PC-3 (cell line): ENCODE measurements at regions of chr1 and their contacts with region 1.

Region 1: GRCh38 chr1:206106328-206107167 is 10.6 kb downstream of the AVPR1B start:
- DNase-seq: peak; percentile 92
- ATAC-seq: peak; percentile 97
- H3K4me3 ChIP-seq: no peak overlapping the region
- H3K27ac ChIP-seq: no peak overlapping the region
- H3K4me1 ChIP-seq: no peaks in the 10 kb centered on the region
- H3K27me3 ChIP-seq: peaks cover 14% of the 10 kb centered on the region
- CTCF ChIP-seq: peak; percentile 96

Region 2: DNA sequence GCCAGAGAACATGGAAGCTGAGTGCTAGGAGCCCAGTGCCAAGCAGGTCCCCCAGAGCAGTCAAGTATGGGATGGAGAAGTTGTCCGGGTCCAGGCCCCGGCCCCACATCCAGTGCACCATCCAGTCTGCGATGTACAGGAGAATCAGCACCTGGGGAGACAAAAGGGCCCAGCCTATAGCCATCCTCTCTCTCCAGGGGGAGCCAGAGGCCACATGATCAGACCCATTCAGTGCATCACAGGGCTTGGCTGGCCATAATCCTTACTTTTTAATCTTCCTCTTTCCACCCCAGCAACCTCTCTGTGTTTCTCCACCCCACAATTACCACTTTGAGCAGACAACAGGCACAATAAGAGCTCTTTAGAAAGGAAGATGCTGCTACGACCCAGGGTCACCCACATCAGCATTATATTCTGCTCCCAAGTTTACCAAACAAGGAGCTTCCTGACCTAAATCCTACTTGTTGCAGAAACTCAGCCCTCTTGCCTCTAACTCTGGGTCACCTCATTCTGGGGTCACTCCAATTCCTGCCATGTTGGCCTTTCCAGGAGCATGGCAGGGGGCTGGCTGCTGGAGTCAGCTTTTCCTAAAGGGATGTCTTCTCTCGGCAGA is 314.9 kb before region 1 on chr1:
- CTCF ChIA-PET with region 1: no interaction called
- POLR2A ChIA-PET with region 1: no interaction called
- intact Hi-C with region 1: loop called (anchors 1 kb)
- DNase-seq: peak; percentile 77
- ATAC-seq: peak; percentile 100
- H3K4me3 ChIP-seq: no peak overlapping the region
- H3K27ac ChIP-seq: no peak overlapping the region
- H3K4me1 ChIP-seq: no peaks in the 10 kb centered on the region
- H3K27me3 ChIP-seq: no peaks in the 10 kb centered on the region
- CTCF ChIP-seq: peak; percentile 93

Region 3: DNA sequence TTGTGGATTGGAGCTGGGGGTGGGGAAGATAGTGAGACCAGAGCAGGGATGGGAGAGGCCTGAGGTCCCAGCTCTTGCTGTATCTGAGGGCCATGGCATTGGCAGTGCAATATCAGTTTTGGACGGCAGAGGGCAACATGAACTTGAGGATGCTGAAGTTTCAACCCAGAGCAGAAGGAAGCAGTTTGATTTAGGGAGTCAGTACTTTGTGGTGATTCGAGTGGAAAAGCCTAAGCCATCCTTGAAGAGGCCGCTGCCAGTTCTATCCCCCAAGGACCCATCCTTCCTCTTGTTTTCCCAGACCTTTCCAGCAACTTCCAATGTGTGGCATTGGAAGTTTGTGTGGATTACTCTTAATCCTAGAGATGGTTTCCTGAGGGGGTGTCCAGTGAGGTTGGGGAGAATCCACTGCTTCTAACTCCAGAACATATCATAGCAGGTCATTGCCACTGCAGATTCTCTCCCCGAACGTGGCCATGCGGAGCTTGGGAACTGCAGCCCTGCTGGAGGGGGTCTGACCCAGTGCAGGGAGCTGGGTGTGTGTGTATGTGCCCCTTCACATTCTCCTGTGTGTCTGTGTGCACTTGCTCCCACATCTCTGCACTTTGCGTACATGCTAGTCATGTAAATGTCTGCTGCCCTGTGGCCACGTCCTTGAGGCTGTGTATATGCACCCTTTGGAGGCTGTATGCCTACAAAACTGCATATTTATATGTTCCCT is 187.4 kb before region 1 on chr1:
- CTCF ChIA-PET with region 1: interaction called, 6 read pairs
- POLR2A ChIA-PET with region 1: no interaction called
- intact Hi-C with region 1: loop called (anchors 1 kb)
- DNase-seq: peak; percentile 94
- ATAC-seq: peak; percentile 97
- H3K4me3 ChIP-seq: no peak overlapping the region
- H3K27ac ChIP-seq: no peak overlapping the region
- H3K4me1 ChIP-seq: no peaks in the 10 kb centered on the region
- H3K27me3 ChIP-seq: no peaks in the 10 kb centered on the region
- CTCF ChIP-seq: peak; percentile 97

Region 4: DNA sequence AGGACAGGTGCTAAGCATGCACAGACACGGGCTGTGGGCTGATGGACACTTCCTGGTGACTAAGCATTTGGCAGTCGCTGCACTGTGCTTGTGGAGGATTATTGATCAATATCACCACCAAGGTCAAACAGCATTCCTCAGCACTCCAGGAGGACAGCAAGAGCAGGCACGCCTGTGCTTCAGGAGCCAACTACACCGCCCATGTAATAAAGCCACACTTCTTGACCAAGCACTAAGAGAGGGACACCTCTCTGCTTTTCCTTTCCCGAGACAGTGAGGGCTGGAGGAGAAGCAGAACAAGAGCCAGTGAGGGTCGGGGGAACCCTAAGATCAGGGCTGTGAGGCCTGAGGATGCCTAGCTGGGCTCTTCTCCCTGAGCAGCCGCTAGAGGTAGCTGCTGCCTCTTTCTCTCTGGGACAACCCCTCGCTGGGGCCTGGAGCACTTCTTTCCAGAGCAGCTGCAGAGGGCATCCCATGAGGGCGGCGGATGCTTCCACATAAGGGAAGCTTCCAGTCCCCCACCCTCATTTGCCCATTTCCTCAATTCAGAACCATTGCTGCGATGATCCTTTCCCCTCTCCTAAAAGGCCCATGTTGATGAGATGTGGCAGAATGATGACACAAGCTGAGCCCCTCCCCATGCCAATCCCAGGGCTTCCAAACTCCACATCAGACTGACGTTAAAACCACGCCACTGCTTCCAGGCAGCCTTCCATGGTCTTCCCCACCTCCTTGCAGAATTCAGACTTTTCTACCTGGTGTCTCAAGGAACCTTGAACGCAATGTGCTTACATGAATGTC is 122.4 kb before region 1 on chr1:
- CTCF ChIA-PET with region 1: interaction called, 9 read pairs
- POLR2A ChIA-PET with region 1: interaction called, 3 read pairs
- intact Hi-C with region 1: loop called (anchors 1 kb)
- DNase-seq: peak; percentile 78
- ATAC-seq: peak; percentile 91
- H3K4me3 ChIP-seq: no peak overlapping the region
- H3K27ac ChIP-seq: no peak overlapping the region
- H3K4me1 ChIP-seq: peaks cover 9% of the 10 kb centered on the region; the same call in 1 of the 2 replicates
- H3K27me3 ChIP-seq: peaks cover 9% of the 10 kb centered on the region
- CTCF ChIP-seq: peak; percentile 93

Region 5: DNA sequence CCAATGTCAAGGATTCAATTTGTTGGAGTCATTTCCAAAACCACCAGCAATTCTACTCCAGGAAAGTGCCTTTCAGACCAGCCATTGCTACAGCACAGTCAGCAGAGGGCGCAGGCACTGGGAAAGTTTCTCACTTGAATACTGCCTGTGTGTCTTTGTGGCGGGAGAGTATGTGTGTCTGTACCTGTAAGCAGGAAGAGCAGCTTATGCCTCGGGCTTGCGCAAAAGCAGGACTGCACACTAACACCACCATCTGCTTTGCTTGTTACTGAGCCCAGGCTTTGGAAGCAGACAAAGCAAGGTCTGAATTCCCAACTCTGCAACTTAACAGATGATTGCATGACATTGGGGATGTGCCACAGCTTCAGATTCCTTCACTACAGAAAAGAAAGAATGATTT is 75.8 kb before region 1 on chr1:
- CTCF ChIA-PET with region 1: interaction called, 17 read pairs
- POLR2A ChIA-PET with region 1: no interaction called
- intact Hi-C with region 1: loop called (anchors 1 kb)
- DNase-seq: peak; percentile 90
- ATAC-seq: peak; percentile 99
- H3K4me3 ChIP-seq: no peak overlapping the region
- H3K27ac ChIP-seq: no peak overlapping the region
- H3K4me1 ChIP-seq: 0 out of 2 replicates have a peak, but pooled peaks cover under 1% of the 10 kb centered on the region
- H3K27me3 ChIP-seq: peaks cover 46% of the 10 kb centered on the region
- CTCF ChIP-seq: peak; percentile 98